ENCODE measurements at regions of chr1 and their contacts with region 1.

Region 1: DNA sequence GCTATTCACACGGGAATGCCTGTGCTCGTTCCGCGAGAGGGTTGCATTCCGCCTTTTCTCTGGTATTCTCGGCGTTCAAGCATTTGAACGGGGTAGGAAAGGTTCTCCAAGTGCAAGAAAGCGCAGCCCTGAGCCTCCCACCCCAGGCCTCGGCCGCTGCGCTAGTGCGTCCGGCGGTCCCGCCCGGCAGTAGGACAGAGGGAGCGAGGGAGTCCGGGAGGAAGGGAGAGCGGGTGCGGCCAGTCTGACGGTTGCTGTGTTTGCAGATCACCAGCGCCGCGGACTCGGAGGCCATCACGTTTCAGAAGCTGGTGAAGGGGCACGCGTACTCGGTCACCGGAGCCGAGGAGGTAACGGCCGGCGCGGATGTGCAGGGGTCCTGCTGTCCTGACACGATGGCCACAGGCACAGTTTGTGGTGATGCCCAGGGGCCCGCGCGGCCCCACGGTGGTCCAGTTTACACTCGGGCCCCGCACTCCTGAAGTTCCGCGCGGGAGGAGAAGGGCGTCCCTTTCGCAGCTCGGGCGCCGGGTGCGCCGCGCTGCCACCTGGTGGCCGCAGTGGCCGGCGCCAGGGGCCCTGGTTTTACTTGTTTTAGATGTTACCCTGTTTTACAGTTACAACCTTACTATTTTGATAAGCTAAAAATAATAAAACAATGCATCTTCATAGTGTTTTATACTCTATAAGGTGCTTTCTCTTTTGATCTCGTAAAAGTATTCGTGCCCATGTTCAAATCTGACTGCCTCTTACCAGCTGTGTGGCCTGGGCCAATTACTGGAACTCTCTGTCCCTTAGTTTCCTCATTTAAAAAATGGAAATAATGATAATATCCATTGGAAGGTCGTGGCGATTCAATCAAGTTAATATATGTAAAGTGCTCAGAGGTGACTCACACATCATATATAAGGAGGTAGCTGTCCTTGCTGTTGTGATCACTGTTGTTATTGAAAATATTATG is 36.7 kb downstream of the CAPN2 start:
- DNase-seq: no peak
- ATAC-seq: peak; percentile 95
- H3K4me3 ChIP-seq: peak overlapping the region; percentile 41; the same call in 1 of the 2 replicates
- H3K27ac ChIP-seq: no peak overlapping the region
- H3K4me1 ChIP-seq: peaks cover 6% of the 10 kb centered on the region
- H3K27me3 ChIP-seq: no peaks in the 10 kb centered on the region
- CTCF ChIP-seq: peak; percentile 81 to 89 (median 84)
- EP300 ChIP-seq: no peak
- POLR2A ChIP-seq: no peak
- RAD21 ChIP-seq: peak; percentile 64

Region 2: GRCh38 chr1:223695941-223696340 is 53.1 kb before region 1 on chr1:
- CTCF ChIA-PET with region 1: interaction called, 69 read pairs
- POLR2A ChIA-PET with region 1: no interaction called
- RAD21 ChIA-PET with region 1: interaction called, 24 read pairs
- SMC1A ChIA-PET with region 1: interaction called, 24 read pairs
- in situ Hi-C with region 1: loop called (anchors 5 kb)
- intact Hi-C with region 1: loop called (anchors 1 kb)
- DNase-seq: no peak
- ATAC-seq: no peak
- H3K4me3 ChIP-seq: no peak overlapping the region
- H3K27ac ChIP-seq: no peak overlapping the region
- H3K4me1 ChIP-seq: peaks cover 3% of the 10 kb centered on the region; the same call in 1 of the 2 replicates
- H3K27me3 ChIP-seq: no peaks in the 10 kb centered on the region
- CTCF ChIP-seq: no peak
- EP300 ChIP-seq: no peak
- POLR2A ChIP-seq: no peak
- RAD21 ChIP-seq: no peak

Region 3: GRCh38 chr1:223700942-223701637 is 48.0 kb before region 1 on chr1:
- CTCF ChIA-PET with region 1: interaction called, 69 read pairs
- POLR2A ChIA-PET with region 1: no interaction called
- RAD21 ChIA-PET with region 1: interaction called, 24 read pairs
- SMC1A ChIA-PET with region 1: interaction called, 24 read pairs
- in situ Hi-C with region 1: loop called (anchors 5 kb)
- intact Hi-C with region 1: loop called (anchors 1 kb)
- DNase-seq: no peak
- ATAC-seq: no peak; the same call in 2 of the 3 replicates
- H3K4me3 ChIP-seq: no peak overlapping the region
- H3K27ac ChIP-seq: no peak overlapping the region
- H3K4me1 ChIP-seq: peaks cover 6% of the 10 kb centered on the region
- H3K27me3 ChIP-seq: no peaks in the 10 kb centered on the region
- CTCF ChIP-seq: no peak
- EP300 ChIP-seq: no peak
- POLR2A ChIP-seq: no peak
- RAD21 ChIP-seq: no peak

Region 4: GRCh38 chr1:223712194-223712849 is 36.7 kb before region 1 on chr1 and contains the start of gene CAPN2:
- CTCF ChIA-PET with region 1: interaction called, 25 read pairs
- POLR2A ChIA-PET with region 1: no interaction called
- RAD21 ChIA-PET with region 1: interaction called, 8 read pairs
- SMC1A ChIA-PET with region 1: interaction called, 5 read pairs
- in situ Hi-C with region 1: no loop called
- intact Hi-C with region 1: loop called (anchors 1 kb)
- DNase-seq: no peak
- ATAC-seq: peak; percentile 81
- H3K4me3 ChIP-seq: peak within 1 kb of the TSS; percentile 72
- H3K27ac ChIP-seq: 0 out of 2 replicates have a peak within 1 kb of the TSS, but pooled peaks have one; percentile 44
- H3K4me1 ChIP-seq: peaks cover 28% of the 10 kb centered on the region
- H3K27me3 ChIP-seq: no peaks in the 10 kb centered on the region
- CTCF ChIP-seq: peak; percentile 46 to 71 (median 63); a peak in 5 of 6 replicates
- EP300 ChIP-seq: no peak
- POLR2A ChIP-seq: no peak
- RAD21 ChIP-seq: peak; percentile 45
- polyA plus RNA-seq, gene CAPN2: 6.0 to 8.2 TPM

Region 5: DNA sequence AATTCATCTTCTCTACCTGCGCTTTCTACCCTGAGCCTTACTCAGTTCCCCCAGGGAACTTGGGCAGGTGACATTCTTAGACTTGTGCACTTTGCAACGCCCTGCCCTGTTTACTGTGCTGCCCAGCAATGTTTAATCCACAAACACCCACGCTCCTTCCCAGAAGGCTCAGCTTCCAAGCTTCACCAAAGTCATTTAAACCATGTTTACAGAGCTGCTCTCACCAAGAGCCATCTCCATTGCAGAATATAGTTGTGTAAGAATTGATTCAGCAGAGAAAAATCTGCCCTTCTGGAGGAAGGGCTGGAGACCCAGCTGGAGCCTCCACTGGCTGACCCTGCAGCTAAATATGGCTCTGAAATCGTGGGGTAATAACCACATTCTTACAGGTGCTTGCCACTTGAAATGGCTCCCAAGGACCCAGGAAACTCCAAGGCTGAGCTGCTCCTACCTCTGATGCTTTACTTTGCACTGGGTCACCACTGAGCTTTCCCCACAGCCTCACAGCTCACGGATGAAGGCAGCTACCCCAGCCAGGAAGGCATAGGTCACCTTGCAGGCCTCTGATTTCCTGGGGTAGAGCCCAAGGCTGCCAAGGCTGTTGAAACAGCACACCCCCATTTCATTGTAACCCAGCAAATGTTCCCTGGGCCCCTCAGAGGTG is 28.0 kb before region 1 on chr1:
- CTCF ChIA-PET with region 1: interaction called, 12 read pairs
- POLR2A ChIA-PET with region 1: no interaction called
- RAD21 ChIA-PET with region 1: interaction called, 3 read pairs
- SMC1A ChIA-PET with region 1: interaction called, 5 read pairs
- in situ Hi-C with region 1: no loop called
- intact Hi-C with region 1: no loop called
- DNase-seq: no peak
- ATAC-seq: no peak
- H3K4me3 ChIP-seq: no peak overlapping the region
- H3K27ac ChIP-seq: no peak overlapping the region
- H3K4me1 ChIP-seq: peaks cover 27% of the 10 kb centered on the region
- H3K27me3 ChIP-seq: no peaks in the 10 kb centered on the region
- CTCF ChIP-seq: no peak
- EP300 ChIP-seq: no peak
- POLR2A ChIP-seq: no peak
- RAD21 ChIP-seq: no peak

Region 6: DNA sequence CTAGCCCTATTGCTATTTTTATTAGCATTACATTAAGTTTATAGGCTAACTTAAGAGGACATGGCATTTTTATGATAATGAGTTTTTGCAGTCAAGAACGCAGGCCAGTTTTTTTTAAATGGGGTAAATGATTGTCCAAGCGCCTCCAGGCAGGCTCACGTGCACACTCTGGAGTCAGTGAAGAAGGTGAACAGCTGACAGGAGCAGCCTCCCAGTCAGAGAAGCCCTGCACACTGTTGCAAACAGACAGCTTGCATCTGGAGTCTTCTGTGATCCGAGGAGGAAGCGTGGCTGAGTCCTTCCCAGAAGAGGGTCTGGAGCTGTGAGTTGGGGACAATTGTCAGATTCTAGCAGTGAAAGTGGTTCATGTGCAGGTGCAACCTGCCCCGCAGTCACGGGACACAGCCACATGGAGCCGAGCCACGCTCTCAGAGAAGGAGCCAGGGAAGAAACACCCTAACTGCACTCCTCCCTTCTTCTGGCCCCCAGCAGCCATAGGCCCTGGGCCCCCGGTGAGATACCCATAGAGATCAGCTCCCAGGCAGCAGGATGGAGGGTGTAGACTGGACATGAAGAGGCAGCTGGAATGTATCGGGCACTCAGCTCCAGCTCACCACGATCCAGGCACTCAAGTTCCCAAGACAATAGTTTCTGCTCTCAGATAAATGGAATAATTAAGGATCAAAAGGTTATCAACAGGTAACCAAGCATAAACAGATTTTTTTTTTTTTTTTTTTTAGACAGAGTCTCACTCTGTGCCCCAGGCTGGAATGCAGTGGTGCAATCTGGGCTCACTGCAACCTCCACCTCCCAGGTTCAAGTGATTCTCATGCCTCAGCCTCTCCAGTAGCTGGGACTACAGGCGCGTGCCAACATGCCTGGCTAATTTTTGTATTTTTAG is 10.3 kb before region 1 on chr1:
- CTCF ChIA-PET with region 1: interaction called, 19 read pairs
- POLR2A ChIA-PET with region 1: no interaction called
- RAD21 ChIA-PET with region 1: no interaction called
- SMC1A ChIA-PET with region 1: interaction called, 4 read pairs
- in situ Hi-C with region 1: no loop called
- intact Hi-C with region 1: no loop called
- DNase-seq: no peak
- ATAC-seq: no peak
- H3K4me3 ChIP-seq: no peak overlapping the region
- H3K27ac ChIP-seq: no peak overlapping the region
- H3K4me1 ChIP-seq: no peaks in the 10 kb centered on the region
- H3K27me3 ChIP-seq: no peaks in the 10 kb centered on the region
- CTCF ChIP-seq: no peak
- EP300 ChIP-seq: no peak
- POLR2A ChIP-seq: no peak
- RAD21 ChIP-seq: no peak

Region 7: GRCh38 chr1:223771814-223772770 is 23.0 kb after region 1 on chr1:
- CTCF ChIA-PET with region 1: interaction called, 16 read pairs
- POLR2A ChIA-PET with region 1: no interaction called
- RAD21 ChIA-PET with region 1: interaction called, 4 read pairs
- SMC1A ChIA-PET with region 1: interaction called, 4 read pairs
- in situ Hi-C with region 1: no loop called
- intact Hi-C with region 1: no loop called
- DNase-seq: no peak
- ATAC-seq: peak; percentile 76
- H3K4me3 ChIP-seq: no peak overlapping the region
- H3K27ac ChIP-seq: no peak overlapping the region
- H3K4me1 ChIP-seq: peaks cover 11% of the 10 kb centered on the region
- H3K27me3 ChIP-seq: no peaks in the 10 kb centered on the region
- CTCF ChIP-seq: no peak
- EP300 ChIP-seq: no peak
- POLR2A ChIP-seq: no peak
- RAD21 ChIP-seq: no peak